Psoas muscle (tissue), 8 donors: ENCODE measurements at regions of chr3 and their contacts with region 1.

Region 1: GRCh38 chr3:61561374-61562041 is at the start of gene PTPRG:
- DNase-seq: peak; percentile 89 to 95
- ATAC-seq: peak; percentile 83 to 88 (median 86)
- H3K4me3 ChIP-seq: peak within 1 kb of the TSS; percentile 96
- H3K27ac ChIP-seq: peak within 1 kb of the TSS; percentile 97
- H3K4me1 ChIP-seq: peaks cover 10% of the 10 kb centered on the region
- H3K27me3 ChIP-seq: no peaks in the 10 kb centered on the region
- CTCF ChIP-seq: no peak
- total RNA-seq, gene PTPRG: 12.6 to 29.5 (median 18.6) TPM

Region 2: GRCh38 chr3:61251174-61251972 is 310.1 kb before region 1 on chr3 and contains the start of gene FHIT:
- intact Hi-C with region 1: loop called in 1 of 2 experiments (anchors 10 kb)
- DNase-seq: peak; percentile 95 to 97
- ATAC-seq: peak; percentile 98 to 99 (median 98)
- H3K4me3 ChIP-seq: peak within 1 kb of the TSS; percentile 94
- H3K27ac ChIP-seq: peak within 1 kb of the TSS; percentile 85
- H3K4me1 ChIP-seq: peaks cover 6% of the 10 kb centered on the region
- H3K27me3 ChIP-seq: no peaks in the 10 kb centered on the region
- CTCF ChIP-seq: no peak
- total RNA-seq, gene FHIT: 4.0 to 10.4 (median 6.2) TPM

Region 3: DNA sequence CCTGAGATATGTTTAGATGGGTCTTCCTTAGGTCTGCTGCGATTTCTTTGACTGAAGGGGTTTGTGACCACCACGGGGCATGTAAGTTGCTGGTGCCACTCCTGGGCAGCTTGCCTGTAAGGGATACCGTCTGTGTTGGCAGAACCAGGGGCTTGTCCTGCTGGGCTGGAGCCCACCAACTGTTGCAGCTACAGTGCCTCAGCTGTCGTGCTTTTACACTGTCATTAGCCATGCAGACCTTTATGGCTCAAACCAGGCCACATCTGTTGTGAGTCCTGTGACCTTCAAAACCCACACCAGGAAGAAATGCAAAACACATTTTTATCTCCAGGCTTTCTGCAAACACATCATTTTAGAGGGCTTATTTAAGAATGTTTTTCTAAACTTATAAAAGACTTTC is 168.5 kb after region 1 on chr3:
- intact Hi-C with region 1: loop called in 1 of 2 experiments (anchors 5 kb)
- DNase-seq: peak in 1 of 2 donors; percentile 65
- ATAC-seq: peak; percentile 78 to 88 (median 85)
- H3K4me3 ChIP-seq: peak overlapping the region; percentile 35
- H3K27ac ChIP-seq: peak overlapping the region; percentile 56
- H3K4me1 ChIP-seq: peaks cover 51% of the 10 kb centered on the region
- H3K27me3 ChIP-seq: no peaks in the 10 kb centered on the region
- CTCF ChIP-seq: no peak

Region 4: GRCh38 chr3:61927332-61927731 is 365.8 kb after region 1 on chr3:
- intact Hi-C with region 1: loop called in 1 of 2 experiments (anchors 10 kb)
- DNase-seq: peak; percentile 76 to 80
- ATAC-seq: peak; percentile 65 to 75 (median 69)
- H3K4me3 ChIP-seq: peak overlapping the region; percentile 50
- H3K27ac ChIP-seq: peak overlapping the region; percentile 90
- H3K4me1 ChIP-seq: peaks cover 64% of the 10 kb centered on the region
- H3K27me3 ChIP-seq: no peaks in the 10 kb centered on the region
- CTCF ChIP-seq: no peak

Region 5: GRCh38 chr3:62188681-62189383 is 627.3 kb after region 1 on chr3:
- intact Hi-C with region 1: loop called (anchors 5 kb)
- DNase-seq: peak; percentile 70 to 88
- ATAC-seq: peak; percentile 79 to 93 (median 82)
- H3K4me3 ChIP-seq: peak overlapping the region; percentile 52
- H3K27ac ChIP-seq: no peak overlapping the region
- H3K4me1 ChIP-seq: peaks cover 15% of the 10 kb centered on the region
- H3K27me3 ChIP-seq: no peaks in the 10 kb centered on the region
- CTCF ChIP-seq: peak; percentile 92